ENCODE measurements at regions of chrX and their contacts with region 1.

Region 1: GRCh38 chrX:101051549-101052302 is at the start of gene TRMT2B:
- DNase-seq: peak; percentile 85
- H3K4me3 Mint-ChIP-seq: peak within 1 kb of the TSS; percentile 85
- H3K27ac Mint-ChIP-seq: peak within 1 kb of the TSS; percentile 95
- H3K4me1 Mint-ChIP-seq: peaks cover 25% of the 10 kb centered on the region
- H3K27me3 Mint-ChIP-seq: no peaks in the 10 kb centered on the region
- total RNA-seq, gene TRMT2B: 20.2 to 22.2 TPM

Region 2: DNA sequence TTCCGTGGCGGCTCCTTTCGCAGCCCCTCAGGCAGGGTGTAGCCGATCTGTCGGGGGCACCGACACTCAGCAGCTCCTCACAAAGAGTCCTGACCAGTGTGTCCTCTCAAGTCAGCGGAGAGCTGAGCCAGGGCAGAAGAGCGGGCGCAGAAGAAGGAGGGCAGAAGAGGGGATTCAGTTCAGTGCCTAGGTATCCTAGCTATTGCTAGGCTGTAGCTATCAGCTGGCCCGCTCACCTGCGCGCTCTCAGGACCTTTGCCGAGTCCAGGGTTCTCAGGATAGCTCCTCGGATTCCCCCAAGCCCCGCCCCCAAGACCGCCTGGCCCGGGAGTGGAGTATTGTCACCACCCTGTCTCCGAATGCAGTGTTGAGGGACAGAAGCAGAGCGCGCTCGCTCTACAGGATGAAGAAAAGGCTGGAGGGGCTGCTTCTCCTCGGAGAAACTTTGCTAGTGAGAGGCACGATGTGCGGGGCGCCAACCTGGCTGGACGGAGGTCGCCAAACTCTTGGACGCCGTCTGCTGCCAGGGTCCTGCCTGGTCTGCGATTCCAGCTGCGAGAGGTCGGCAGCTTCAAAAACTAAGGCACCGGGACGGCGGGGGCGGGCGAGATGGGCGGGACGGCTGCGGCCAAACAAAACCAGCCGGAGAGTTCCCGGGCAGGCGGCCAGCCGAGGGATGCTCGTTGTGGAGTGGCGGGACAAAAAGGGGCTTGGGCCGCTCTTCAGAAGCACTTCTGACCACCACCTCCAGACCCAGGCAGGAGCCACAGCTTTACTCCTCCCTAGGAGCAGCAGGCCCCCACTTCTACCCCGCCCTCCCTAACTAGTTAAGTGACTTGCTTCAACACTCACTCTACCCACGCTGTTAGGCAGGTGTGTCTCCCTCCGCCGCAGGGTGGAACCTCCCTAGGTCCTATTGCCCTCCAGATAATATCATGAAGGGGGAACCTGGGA is 122.8 kb before region 1 on chrX and contains the start of gene XKRX:
- CTCF ChIA-PET with region 1: no interaction called
- intact Hi-C with region 1: loop called (anchors 1 kb)
- DNase-seq: peak; percentile 74
- H3K4me3 Mint-ChIP-seq: peak within 1 kb of the TSS; percentile 82
- H3K27ac Mint-ChIP-seq: no peak within 1 kb of the TSS
- H3K4me1 Mint-ChIP-seq: peaks cover 52% of the 10 kb centered on the region
- H3K27me3 Mint-ChIP-seq: no peaks in the 10 kb centered on the region
- total RNA-seq, gene XKRX: 0.64 to 0.72 TPM

Region 3: GRCh38 chrX:101348452-101349192 is 296.9 kb after region 1 on chrX and contains the start of gene TIMM8A:
- CTCF ChIA-PET with region 1: no interaction called
- intact Hi-C with region 1: loop called (anchors 2 kb)
- DNase-seq: peak; percentile 82
- H3K4me3 Mint-ChIP-seq: peak within 1 kb of the TSS; percentile 84
- H3K27ac Mint-ChIP-seq: peak within 1 kb of the TSS; percentile 93
- H3K4me1 Mint-ChIP-seq: peaks cover 16% of the 10 kb centered on the region
- H3K27me3 Mint-ChIP-seq: no peaks in the 10 kb centered on the region
- total RNA-seq, gene TIMM8A: 14.9 to 15.9 TPM

Region 4: DNA sequence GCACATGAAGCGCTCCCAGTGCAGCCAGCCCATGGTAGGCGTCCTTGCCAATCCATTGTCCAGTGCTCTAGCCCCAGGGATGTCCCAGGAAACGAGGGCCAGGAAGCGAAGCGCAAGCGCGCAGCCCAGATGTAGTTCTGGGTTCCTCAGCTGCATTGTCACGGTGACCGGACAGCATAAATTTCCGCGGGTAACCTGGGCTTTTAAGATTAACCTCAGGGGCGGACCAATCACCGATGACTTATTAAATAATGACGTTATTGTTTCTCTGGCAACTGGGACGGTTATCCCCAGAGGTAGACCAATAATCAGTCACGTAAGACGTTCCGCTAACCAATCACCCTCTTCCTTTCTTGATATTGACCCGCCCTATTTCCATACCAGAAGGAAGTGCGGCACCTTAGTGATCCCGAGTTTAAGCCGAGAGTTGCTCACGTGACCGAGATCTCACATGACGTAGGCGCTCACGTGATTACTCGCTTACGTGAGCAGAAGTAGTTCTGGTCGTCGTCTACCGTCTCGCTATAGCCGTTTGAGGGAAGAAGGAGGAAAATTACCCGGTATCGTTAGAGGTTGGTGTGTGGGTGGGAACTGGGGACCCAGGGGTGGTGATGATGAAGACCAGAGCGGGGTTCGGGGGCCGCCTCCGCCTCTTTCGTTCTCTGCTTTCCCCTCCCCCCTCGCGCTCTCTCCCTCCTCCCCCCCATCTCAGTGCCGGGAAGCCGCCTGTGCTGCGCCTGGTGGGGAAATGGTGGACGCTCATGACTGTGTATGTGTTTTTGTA is 356.2 kb after region 1 on chrX and contains the starts of genes GLA and HNRNPH2:
- CTCF ChIA-PET with region 1: no interaction called
- intact Hi-C with region 1: loop called (anchors 5 kb)
- DNase-seq: peak; percentile 94
- H3K4me3 Mint-ChIP-seq: peak within 1 kb of the TSS; percentile 99
- H3K27ac Mint-ChIP-seq: peak within 1 kb of the TSS; percentile 95
- H3K4me1 Mint-ChIP-seq: peaks cover 28% of the 10 kb centered on the region
- H3K27me3 Mint-ChIP-seq: no peaks in the 10 kb centered on the region
- total RNA-seq, gene GLA: 40.7 to 45.8 TPM
- total RNA-seq, gene HNRNPH2: 31.5 to 31.9 TPM

Measured in activated naive CD4-positive, alpha-beta T cell treated with anti-CD3 and anti-CD28 coated beads for 36 hours (primary cell).